IMR-90 (cell line): ENCODE measurements at regions of chr1 and their contacts with region 1.

Region 1: DNA sequence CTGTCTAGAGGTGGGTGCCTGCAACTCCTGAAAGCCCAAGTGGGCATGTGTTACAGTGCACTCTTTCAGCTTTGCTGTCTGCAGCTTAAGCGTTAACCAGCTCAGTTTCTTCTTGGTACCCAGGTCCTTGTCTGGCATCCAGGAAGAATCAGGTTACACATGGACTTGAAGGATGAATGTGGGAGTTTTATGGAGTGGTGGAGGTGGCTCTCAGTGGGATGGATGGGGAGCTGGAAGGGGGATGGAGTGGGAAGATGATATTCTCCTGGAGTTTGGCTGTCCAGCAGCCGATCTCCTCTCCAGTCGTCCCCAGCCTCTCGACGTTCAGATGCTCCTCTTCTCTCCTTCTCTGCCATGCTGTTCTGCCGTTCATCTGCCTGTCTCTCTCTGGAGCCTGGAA is 9.4 kb downstream of the METTL18 start:
- DNase-seq: no peak
- ATAC-seq: no peak
- H3K4me3 ChIP-seq: no peak overlapping the region
- H3K27ac ChIP-seq: no peak overlapping the region
- H3K4me1 ChIP-seq: no peaks in the 10 kb centered on the region
- H3K27me3 ChIP-seq: peaks cover 7% of the 10 kb centered on the region
- CTCF ChIP-seq: no peak
- POLR2A ChIP-seq: no peak
- RAD21 ChIP-seq: no peak

Region 2: GRCh38 chr1:168273575-168273974 is 1511.7 kb before region 1 on chr1:
- CTCF ChIA-PET with region 1: interaction called, 11 read pairs
- POLR2A ChIA-PET with region 1: no interaction called
- dilution Hi-C with region 1: no loop called
- in situ Hi-C with region 1: no loop called
- intact Hi-C with region 1: no loop called
- DNase-seq: no peak
- ATAC-seq: no peak
- H3K4me3 ChIP-seq: no peak overlapping the region
- H3K27ac ChIP-seq: no peak overlapping the region
- H3K4me1 ChIP-seq: no peaks in the 10 kb centered on the region
- H3K27me3 ChIP-seq: no peaks in the 10 kb centered on the region
- CTCF ChIP-seq: no peak
- POLR2A ChIP-seq: no peak
- RAD21 ChIP-seq: no peak

Region 3: DNA sequence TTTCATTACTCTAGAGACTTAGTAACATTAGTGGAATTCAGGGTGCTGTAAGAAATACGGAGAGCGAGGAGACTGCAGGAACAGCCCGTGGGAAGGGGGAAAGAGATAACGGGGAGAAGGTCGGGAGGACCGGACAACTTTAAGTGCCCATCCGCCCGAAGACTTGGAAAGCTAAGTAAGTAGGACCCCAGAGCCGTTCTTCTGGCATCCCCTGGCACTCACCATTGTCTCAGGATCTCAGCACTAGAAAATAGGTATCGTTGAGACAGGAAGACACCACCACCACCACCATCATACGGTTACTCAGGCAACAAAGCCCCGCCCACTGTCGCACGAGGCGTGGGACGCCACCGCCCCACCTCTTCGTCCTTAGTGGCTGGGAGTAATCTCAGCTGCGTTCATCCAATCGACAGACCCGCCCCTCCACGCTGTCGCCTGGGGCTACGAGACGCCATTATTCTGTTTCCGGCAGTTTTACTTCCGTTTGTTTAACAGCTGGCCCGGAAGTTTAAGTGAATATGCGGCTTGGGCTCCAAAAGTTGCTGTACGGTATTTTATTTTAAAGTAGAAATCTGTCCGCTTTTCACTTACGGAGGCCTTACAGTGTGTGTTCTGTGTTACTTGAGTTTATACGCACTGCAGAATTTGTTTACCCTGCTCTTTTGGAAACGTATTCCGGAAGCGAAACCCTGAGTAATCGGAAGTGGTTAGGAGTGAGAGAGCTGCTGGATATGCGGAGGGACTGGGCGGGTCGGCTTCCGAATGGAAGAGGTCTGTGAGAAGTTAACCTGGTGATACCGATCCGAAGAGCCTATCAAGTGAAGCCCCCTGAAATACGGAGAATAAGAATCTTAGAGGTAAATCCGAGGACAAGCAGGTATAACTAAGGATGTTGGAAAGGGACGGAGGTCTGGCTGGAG is 417.5 kb before region 1 on chr1 and contains the starts of genes BLZF1 and NME7:
- CTCF ChIA-PET with region 1: no interaction called
- POLR2A ChIA-PET with region 1: no interaction called
- dilution Hi-C with region 1: no loop called
- in situ Hi-C with region 1: no loop called
- intact Hi-C with region 1: no loop called
- DNase-seq: peak; percentile 96
- ATAC-seq: peak; percentile 99
- H3K4me3 ChIP-seq: peak within 1 kb of the TSS; percentile 48
- H3K27ac ChIP-seq: peak within 1 kb of the TSS; percentile 62
- H3K4me1 ChIP-seq: 0 out of 2 replicates have a peak, but pooled peaks cover 4% of the 10 kb centered on the region
- H3K27me3 ChIP-seq: no peaks in the 10 kb centered on the region
- CTCF ChIP-seq: no peak
- POLR2A ChIP-seq: peak; percentile 81
- RAD21 ChIP-seq: no peak
- total RNA-seq, gene BLZF1: 24.2 and 38.9 TPM in 2 replicates
- total RNA-seq, gene NME7: 18.3 and 44.4 TPM in 2 replicates

Region 4: DNA sequence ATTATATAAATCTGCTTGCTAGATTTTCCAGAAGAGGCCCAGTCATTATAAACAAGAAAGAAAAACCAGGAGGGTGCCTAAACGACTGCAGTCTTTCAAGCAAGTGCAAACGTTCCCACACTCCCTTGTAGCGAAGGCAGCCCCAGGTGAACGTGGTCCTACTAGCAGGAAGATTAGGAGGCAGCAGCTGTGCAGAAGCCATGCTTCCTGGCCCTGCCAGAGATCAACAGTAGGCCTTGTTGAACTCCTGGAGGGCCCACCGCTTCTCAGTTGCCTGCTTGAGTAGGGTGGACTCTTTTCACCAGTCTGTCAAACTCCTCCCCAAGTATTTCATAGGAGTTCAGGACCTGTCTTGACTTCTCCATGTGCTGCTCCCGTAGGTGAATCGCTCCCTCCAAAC is 583.7 kb after region 1 on chr1:
- CTCF ChIA-PET with region 1: no interaction called
- POLR2A ChIA-PET with region 1: no interaction called
- dilution Hi-C with region 1: no loop called
- in situ Hi-C with region 1: no loop called
- intact Hi-C with region 1: no loop called
- DNase-seq: no peak
- ATAC-seq: no peak
- H3K4me3 ChIP-seq: no peak overlapping the region
- H3K27ac ChIP-seq: no peak overlapping the region
- H3K4me1 ChIP-seq: no peaks in the 10 kb centered on the region
- H3K27me3 ChIP-seq: no peaks in the 10 kb centered on the region
- CTCF ChIP-seq: no peak
- POLR2A ChIP-seq: no peak
- RAD21 ChIP-seq: no peak